A673 (cell line): ENCODE measurements at regions of chr3 and their contacts with region 1.

Region 1: DNA sequence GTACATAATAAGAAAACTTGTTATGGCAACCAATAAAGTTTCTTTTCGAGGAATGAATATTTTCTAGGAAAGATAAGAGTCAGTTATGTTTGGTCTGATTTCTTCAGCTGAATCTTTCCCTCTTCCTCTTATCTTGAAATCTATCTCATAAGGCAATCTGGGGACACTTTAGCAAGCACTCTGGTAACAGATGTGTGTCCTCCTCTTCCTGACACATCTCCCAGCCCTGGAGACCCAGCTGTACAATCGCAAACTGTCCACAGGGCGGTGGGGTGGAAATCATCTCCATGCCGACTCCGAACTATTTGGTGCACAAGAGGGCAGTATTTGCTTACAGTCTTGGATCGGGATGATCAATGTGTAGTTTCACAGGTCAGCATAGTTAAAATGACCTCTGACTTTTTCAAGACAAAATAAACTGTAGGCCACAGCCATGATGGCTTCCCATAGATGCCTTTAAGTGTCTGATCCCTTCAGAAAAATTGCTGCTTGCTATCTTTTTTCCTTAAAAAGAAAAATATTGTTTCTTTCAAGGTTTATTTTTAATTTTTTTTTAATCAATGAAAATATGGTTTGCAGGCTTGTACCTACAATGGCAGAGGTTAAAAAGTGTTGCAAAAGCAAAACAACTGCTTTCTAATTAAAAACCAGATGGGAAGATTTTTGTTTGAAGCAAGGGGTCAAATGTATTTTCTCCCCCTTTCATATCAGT is 17.7 kb downstream of the EEFSEC start:
- DNase-seq: peak; percentile 77
- H3K4me3 ChIP-seq: no peak overlapping the region
- H3K27ac ChIP-seq: no peak overlapping the region
- H3K4me1 ChIP-seq: peaks cover 3% of the 10 kb centered on the region
- H3K27me3 ChIP-seq: no peaks in the 10 kb centered on the region
- CTCF ChIP-seq: peak; percentile 77

Region 2: GRCh38 chr3:127598841-127599570 is 572.0 kb before region 1 on chr3:
- CTCF ChIA-PET with region 1: no interaction called
- POLR2A ChIA-PET with region 1: no interaction called
- intact Hi-C with region 1: no loop called
- DNase-seq: no peak
- H3K4me3 ChIP-seq: peak overlapping the region; percentile 62
- H3K27ac ChIP-seq: peak overlapping the region; percentile 96
- H3K4me1 ChIP-seq: peaks cover 17% of the 10 kb centered on the region
- H3K27me3 ChIP-seq: no peaks in the 10 kb centered on the region
- CTCF ChIP-seq: no peak

Region 3: GRCh38 chr3:128322066-128323022 is 151.4 kb after region 1 on chr3:
- CTCF ChIA-PET with region 1: no interaction called
- POLR2A ChIA-PET with region 1: no interaction called
- intact Hi-C with region 1: loop called (anchors 10 kb)
- DNase-seq: peak; percentile 48
- H3K4me3 ChIP-seq: no peak overlapping the region
- H3K27ac ChIP-seq: no peak overlapping the region
- H3K4me1 ChIP-seq: no peaks in the 10 kb centered on the region
- H3K27me3 ChIP-seq: no peaks in the 10 kb centered on the region
- CTCF ChIP-seq: peak; percentile 62

Region 4: GRCh38 chr3:128456776-128457715 is 286.1 kb after region 1 on chr3:
- CTCF ChIA-PET with region 1: no interaction called
- POLR2A ChIA-PET with region 1: no interaction called
- intact Hi-C with region 1: no loop called
- DNase-seq: no peak
- H3K4me3 ChIP-seq: no peak overlapping the region
- H3K27ac ChIP-seq: no peak overlapping the region
- H3K4me1 ChIP-seq: no peaks in the 10 kb centered on the region
- H3K27me3 ChIP-seq: no peaks in the 10 kb centered on the region
- CTCF ChIP-seq: no peak

Region 5: DNA sequence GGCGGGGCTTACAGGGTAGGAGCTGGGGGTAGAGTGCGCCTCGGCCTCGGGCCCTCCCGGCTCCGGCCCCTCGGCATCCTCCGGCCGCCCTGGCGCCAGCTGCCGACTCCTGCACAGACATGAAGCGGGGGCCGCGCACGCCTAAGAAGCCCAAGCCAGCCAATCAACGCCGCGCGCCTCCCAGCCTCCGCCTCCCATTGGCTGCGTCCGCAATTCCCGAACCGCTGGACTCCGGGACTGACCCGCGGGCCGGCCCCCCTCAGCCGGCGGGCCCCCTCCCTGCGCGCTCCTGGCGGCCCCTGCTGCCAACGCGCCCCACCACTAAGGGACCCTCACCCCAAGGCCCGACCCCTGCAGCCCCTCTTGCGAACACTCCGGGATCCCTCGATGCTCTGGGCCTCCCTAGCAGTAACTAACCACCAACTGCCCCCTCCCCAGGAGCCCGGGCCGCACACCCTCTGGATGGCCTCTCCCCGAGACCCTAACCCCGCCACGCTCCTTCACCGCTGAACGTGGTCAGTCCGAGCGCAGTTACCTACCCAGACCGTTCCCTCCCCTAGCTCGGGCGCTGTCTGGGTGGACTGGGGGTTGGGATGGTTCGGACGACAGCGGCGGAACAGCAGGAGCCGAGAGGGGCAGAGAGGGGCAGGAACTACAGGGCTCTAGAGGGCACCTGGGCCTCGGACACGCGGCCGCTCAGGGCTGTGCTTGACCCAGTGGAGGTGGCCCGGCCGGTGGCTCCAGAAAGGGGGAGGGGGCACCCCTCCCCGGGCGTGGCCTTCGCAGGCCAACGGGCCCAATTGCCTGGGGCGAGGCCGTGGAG is 317.1 kb after region 1 on chr3:
- CTCF ChIA-PET with region 1: no interaction called
- POLR2A ChIA-PET with region 1: no interaction called
- intact Hi-C with region 1: loop called (anchors 5 kb)
- DNase-seq: peak; percentile 86
- H3K4me3 ChIP-seq: peak overlapping the region; percentile 81
- H3K27ac ChIP-seq: peak overlapping the region; percentile 60
- H3K4me1 ChIP-seq: peaks cover 19% of the 10 kb centered on the region
- H3K27me3 ChIP-seq: peaks cover 13% of the 10 kb centered on the region
- CTCF ChIP-seq: no peak